Gastrocnemius medialis (tissue), 4 donors: ENCODE measurements at regions of chr5 and their contacts with region 1.

Region 1: GRCh38 chr5:172106511-172107356 is 81.3 kb downstream of the STK10 start:
- DNase-seq: no peak
- ATAC-seq: peak; percentile 52 to 53
- H3K4me3 ChIP-seq: peak overlapping the region; percentile 29 to 43 (median 31)
- H3K27ac ChIP-seq: no peak overlapping the region
- H3K4me1 ChIP-seq: peaks cover 27 to 32% of the 10 kb centered on the region in 2 donors
- H3K27me3 ChIP-seq: no peaks in the 10 kb centered on the region
- CTCF ChIP-seq: peak; percentile 60 to 98 (median 87)
- POLR2A ChIP-seq: no peak

Region 2: DNA sequence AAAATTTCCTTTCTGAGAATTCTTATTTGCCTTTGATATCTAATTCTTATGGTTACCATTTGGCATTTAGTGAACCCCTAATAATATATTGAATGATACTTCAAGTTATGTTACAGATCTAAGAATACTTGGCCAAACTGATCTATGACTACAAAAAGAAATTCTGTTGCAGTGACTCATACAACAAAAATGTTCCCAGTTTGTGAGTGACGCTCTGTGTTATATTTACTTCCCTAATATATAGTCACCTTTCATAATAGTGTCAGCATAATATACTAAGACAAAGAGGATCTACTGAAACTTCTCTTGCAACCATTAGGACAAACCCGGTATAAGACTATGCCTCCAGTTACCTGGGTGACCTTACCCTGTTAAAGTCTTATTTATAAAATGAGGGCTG is 1014.5 kb before region 1 on chr5:
- in situ Hi-C with region 1: no loop called
- intact Hi-C with region 1: no loop called
- DNase-seq: no peak
- ATAC-seq: no peak
- H3K4me3 ChIP-seq: no peak overlapping the region
- H3K27ac ChIP-seq: no peak overlapping the region
- H3K4me1 ChIP-seq: no peaks in the 10 kb centered on the region
- H3K27me3 ChIP-seq: no peaks in the 10 kb centered on the region
- CTCF ChIP-seq: no peak
- POLR2A ChIP-seq: no peak

Region 3: DNA sequence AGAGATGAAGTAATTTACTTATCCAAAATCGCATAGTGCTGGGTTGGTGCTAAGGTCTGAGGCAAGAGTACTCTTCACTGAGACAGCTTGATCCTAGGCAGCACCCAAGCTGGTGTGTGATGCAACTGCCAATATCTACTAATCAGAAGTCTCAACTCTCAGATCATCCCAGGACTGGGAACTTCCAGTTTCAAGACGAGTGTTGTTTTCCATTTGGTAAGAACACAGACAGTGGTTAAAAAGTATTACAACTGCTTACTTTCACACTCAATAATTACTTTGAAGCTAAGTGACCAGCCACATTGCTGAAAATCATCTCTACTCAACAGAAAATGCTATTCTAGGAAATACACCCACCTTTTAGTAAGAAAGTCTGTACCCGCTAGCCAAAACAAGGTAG is 145.6 kb before region 1 on chr5:
- in situ Hi-C with region 1: no loop called
- intact Hi-C with region 1: no loop called
- DNase-seq: peak in 1 of 2 donors; percentile 23
- ATAC-seq: peak; percentile 36 to 60
- H3K4me3 ChIP-seq: no peak overlapping the region
- H3K27ac ChIP-seq: no peak overlapping the region
- H3K4me1 ChIP-seq: peaks cover 75 to 77% of the 10 kb centered on the region in 2 donors
- H3K27me3 ChIP-seq: no peaks in the 10 kb centered on the region
- CTCF ChIP-seq: no peak
- POLR2A ChIP-seq: no peak

Region 4: GRCh38 chr5:172188033-172188892 is 81.5 kb after region 1 on chr5 and contains the start of gene STK10:
- in situ Hi-C with region 1: loop called in 3 of 4 experiments (anchors 5 to 10 kb)
- intact Hi-C with region 1: loop called (anchors 1 kb)
- DNase-seq: peak; percentile 80 to 87
- ATAC-seq: peak; percentile 88 to 90
- H3K4me3 ChIP-seq: peak within 1 kb of the TSS; percentile 57 to 87 (median 86)
- H3K27ac ChIP-seq: peak within 1 kb of the TSS; percentile 79 to 88 (median 84)
- H3K4me1 ChIP-seq: peaks cover 14 to 15% of the 10 kb centered on the region in 2 donors
- H3K27me3 ChIP-seq: no peaks in the 10 kb centered on the region
- CTCF ChIP-seq: peak; percentile 80 to 94 (median 84)
- POLR2A ChIP-seq: peak; percentile 68 to 71
- total RNA-seq, gene STK10: 5.4 to 18.3 (median 5.7) TPM

Region 5: DNA sequence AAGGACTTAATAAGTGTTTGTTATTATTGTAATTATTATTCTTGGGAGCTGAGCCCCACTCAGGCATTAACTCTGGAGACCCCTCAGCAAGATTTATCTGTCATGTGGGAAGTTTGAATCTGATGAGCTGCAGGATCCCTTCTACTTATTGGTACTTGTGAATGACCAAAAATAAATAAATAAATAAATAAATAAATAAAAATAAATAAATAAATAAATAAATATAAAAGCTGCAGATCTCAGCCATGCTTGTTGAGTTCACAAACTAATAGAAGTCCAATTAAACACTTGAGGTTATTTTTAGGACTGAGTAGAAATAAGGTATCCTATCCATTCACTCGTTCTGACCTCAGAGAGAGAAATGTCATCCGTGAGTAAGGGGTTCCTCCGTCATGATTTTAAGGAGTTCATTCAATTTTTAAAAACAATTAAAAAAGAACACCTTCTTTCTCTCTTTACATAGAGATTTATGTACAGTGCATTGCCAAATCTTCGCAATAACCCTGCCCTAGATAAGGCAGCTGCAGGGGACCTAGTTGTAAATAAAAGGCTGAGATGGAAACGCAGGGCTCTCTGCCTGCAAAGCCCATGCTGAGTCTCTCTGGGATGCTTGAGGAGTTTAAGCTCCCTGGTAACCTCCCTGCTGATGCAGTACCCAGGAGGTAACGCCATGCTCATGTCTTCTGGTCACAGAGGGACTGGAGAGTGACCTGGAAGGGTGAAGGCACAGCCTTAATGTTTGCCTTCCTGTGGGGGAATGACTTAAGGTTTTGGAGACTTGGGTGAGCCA is 88.4 kb after region 1 on chr5:
- in situ Hi-C with region 1: loop called in 2 of 4 experiments (anchors 5 to 10 kb)
- intact Hi-C with region 1: no loop called
- DNase-seq: no peak
- ATAC-seq: no peak
- H3K4me3 ChIP-seq: no peak overlapping the region
- H3K27ac ChIP-seq: no peak overlapping the region
- H3K4me1 ChIP-seq: no peaks in the 10 kb centered on the region
- H3K27me3 ChIP-seq: no peaks in the 10 kb centered on the region
- CTCF ChIP-seq: no peak
- POLR2A ChIP-seq: no peak

Region 6: GRCh38 chr5:172293054-172293744 is 186.5 kb after region 1 on chr5:
- in situ Hi-C with region 1: loop called (anchors 5 to 10 kb)
- intact Hi-C with region 1: loop called (anchors 1 kb)
- DNase-seq: peak; percentile 53 to 71
- ATAC-seq: peak; percentile 97 to 99
- H3K4me3 ChIP-seq: no peak overlapping the region
- H3K27ac ChIP-seq: no peak overlapping the region
- H3K4me1 ChIP-seq: peaks cover 4 to 7% of the 10 kb centered on the region in 2 donors
- H3K27me3 ChIP-seq: no peaks in the 10 kb centered on the region
- CTCF ChIP-seq: peak; percentile 59 to 87 (median 68)
- POLR2A ChIP-seq: no peak